HEK293 (cell line): ENCODE measurements at regions of chrX and their contacts with region 1.

Region 1: DNA sequence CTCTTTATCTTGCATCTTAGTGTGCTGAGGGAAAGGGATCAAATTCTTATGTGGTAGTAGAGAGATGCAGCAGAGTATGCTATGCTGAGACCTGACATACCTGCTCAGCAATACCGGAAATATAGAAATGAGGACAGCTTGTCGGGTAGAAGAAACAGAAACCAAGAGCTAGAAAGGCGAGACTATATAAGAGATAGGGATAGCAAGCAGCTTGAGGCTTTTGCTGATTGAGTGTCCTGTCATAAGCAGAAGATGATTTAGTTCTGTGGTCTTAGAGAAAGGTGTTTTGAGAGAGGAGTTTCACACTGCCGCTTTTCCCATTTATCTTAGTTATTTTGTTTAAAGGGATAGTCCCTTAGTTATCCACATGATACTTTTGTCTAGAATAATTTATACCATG is 31.7 kb downstream of the USP9X start:
- H3K4me3 ChIP-seq: no peak overlapping the region
- H3K27ac ChIP-seq: no peak overlapping the region
- H3K4me1 ChIP-seq: peaks cover 60% of the 10 kb centered on the region
- CTCF ChIP-seq: no peak

Region 2: GRCh38 chrX:40201329-40201885 is 915.5 kb before region 1 on chrX:
- CTCF ChIA-PET with region 1: no interaction called
- POLR2A ChIA-PET with region 1: no interaction called
- H3K4me3 ChIP-seq: no peak overlapping the region
- H3K27ac ChIP-seq: no peak overlapping the region
- H3K4me1 ChIP-seq: no peaks in the 10 kb centered on the region
- CTCF ChIP-seq: no peak

Region 3: DNA sequence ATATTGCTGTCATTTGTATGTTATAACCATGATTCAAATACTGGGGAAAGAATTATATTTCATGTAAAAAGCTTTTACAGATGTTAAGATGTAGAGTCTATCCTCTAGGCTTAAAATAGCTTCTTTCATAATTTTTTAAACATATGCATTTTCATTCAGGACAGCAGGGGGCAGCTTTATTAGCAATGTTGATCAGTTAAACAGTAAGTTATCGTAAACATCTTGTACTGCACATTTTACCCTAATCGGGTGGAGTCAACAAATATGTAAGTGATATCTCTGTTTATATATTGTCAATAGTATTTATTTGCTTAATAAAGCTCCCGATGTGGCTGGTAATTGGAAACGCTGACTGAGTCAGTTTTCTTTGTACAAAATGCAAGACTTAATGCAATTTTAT is 239.1 kb before region 1 on chrX:
- CTCF ChIA-PET with region 1: interaction called, 17 read pairs
- POLR2A ChIA-PET with region 1: no interaction called
- H3K4me3 ChIP-seq: no peak overlapping the region
- H3K27ac ChIP-seq: no peak overlapping the region
- H3K4me1 ChIP-seq: no peaks in the 10 kb centered on the region
- CTCF ChIP-seq: no peak

Region 4: GRCh38 chrX:40933132-40933705 is 183.7 kb before region 1 on chrX:
- CTCF ChIA-PET with region 1: interaction called, 10 read pairs
- POLR2A ChIA-PET with region 1: no interaction called
- H3K4me3 ChIP-seq: peak overlapping the region; percentile 24
- H3K27ac ChIP-seq: peak overlapping the region; percentile 75
- H3K4me1 ChIP-seq: peaks cover under 1% of the 10 kb centered on the region
- CTCF ChIP-seq: no peak

Region 5: GRCh38 chrX:41084044-41084892 is 32.7 kb before region 1 on chrX:
- CTCF ChIA-PET with region 1: interaction called, 14 read pairs
- POLR2A ChIA-PET with region 1: interaction called, 11 read pairs
- H3K4me3 ChIP-seq: peak overlapping the region; percentile 61
- H3K27ac ChIP-seq: peak overlapping the region; percentile 99
- H3K4me1 ChIP-seq: peaks cover 7% of the 10 kb centered on the region
- CTCF ChIP-seq: no peak

Region 6: DNA sequence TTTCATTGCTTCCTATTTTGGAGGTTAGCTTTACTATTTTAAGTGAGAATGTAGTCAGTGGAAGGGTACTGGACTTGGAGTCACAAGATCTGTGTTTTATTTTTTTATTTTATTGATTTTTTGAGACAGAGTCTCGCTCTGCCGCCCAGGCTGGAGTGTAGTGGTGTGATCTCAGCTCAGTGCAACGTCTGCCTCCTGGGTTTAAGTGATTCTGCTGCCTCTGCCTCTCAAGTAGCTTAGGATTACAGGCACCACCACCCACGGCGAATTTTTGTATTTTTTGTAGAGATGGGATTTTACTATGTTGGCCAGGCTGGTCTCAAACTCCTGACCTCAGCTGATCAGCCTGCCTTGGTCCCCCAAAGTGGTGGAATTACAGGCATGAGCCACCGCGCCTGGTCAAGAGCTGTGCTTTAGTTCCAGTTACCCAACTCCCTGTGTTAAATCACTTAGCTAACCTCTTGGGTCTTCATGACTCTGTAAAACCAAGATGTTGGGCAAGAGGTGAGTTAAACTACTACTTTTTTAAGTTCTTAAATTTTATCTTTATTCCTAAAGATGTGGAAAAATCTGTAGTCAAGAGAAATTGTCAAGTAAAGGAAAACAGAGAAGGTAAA is 20.5 kb before region 1 on chrX:
- CTCF ChIA-PET with region 1: interaction called, 34 read pairs
- POLR2A ChIA-PET with region 1: no interaction called
- H3K4me3 ChIP-seq: no peak overlapping the region
- H3K27ac ChIP-seq: no peak overlapping the region
- H3K4me1 ChIP-seq: peaks cover 49% of the 10 kb centered on the region
- CTCF ChIP-seq: no peak

Region 7: DNA sequence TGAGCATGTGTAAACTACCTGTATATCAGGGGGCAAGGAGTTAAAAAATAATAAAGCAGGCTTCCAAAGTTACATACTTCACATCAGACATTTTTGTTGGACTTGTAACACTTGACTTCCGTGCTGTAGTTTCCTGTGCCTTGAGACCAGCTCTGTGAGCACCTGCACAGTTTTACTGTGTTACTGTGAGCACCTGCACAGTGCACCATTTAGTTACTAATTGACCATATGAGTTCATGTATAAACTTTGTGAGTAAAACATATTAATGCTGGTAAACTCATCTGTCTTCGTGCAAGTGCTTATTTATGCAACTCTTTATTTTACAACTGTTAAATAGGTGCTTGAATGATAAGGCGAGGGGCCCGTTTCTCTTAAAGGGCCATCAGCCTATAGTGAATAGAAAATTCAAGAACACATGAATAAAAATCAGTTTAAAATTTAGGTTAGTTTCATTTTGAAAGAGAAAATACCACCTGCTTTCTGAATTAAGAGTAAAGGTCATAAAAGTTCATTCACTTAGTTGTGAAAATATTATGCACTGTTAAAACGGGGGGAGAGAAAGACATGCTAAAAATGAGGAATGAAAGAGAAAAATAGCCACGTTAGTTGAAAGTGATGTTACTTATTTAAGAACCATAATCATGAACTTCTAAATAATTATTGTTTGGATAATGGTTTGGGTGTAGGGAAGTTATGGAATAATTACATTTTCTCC is 10.7 kb after region 1 on chrX:
- CTCF ChIA-PET with region 1: interaction called, 28 read pairs
- POLR2A ChIA-PET with region 1: no interaction called
- H3K4me3 ChIP-seq: no peak overlapping the region
- H3K27ac ChIP-seq: no peak overlapping the region
- H3K4me1 ChIP-seq: peaks cover 15% of the 10 kb centered on the region; the same call in 1 of the 2 replicates
- CTCF ChIP-seq: no peak

Region 8: DNA sequence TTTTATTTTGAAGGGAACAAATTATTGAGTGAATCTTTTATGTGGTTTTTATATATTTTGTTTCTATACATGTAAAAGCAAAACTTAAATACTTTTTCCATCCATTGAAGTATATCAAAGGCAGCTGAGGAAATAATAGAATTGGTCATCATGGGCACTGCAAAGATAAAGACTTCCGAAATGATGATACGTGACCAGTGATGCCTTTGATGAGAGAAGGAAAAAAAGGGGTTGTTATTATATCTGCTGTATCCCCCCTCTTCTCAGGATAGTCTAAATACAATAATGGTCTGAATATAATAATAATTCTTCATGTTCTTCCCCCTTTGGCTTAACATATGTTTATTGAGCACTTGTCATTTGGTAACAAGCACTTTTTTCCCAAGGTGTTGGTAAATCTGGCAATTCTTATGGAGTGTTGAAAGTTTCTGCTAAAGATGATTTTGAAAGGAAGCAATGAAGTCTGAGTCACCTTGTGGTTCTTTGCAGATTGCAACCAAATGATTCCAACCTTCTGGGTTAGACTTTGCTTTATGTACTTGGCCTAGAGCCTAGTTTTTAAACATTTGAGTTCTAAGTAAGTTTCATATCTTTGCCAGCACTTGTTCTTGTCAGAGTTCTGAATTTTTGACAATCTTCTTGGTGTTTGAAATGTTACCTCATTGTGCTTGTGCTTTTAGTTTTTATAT is 29.1 kb after region 1 on chrX:
- CTCF ChIA-PET with region 1: interaction called, 10 read pairs
- POLR2A ChIA-PET with region 1: no interaction called
- H3K4me3 ChIP-seq: no peak overlapping the region
- H3K27ac ChIP-seq: no peak overlapping the region
- H3K4me1 ChIP-seq: no peaks in the 10 kb centered on the region
- CTCF ChIP-seq: no peak